ENCODE measurements at regions of chr14 and their contacts with region 1.

Region 1: GRCh38 chr14:29927376-29928116 is at the start of gene PRKD1:
- DNase-seq: peak in 1 of 2 donors; percentile 77
- H3K4me3 ChIP-seq: peak within 1 kb of the TSS; percentile 79 to 85
- H3K27ac ChIP-seq: peak within 1 kb of the TSS; percentile 86 to 90
- H3K4me1 ChIP-seq: peaks cover 0 to 13% of the 10 kb centered on the region in 2 donors
- H3K27me3 ChIP-seq: no peaks in the 10 kb centered on the region
- CTCF ChIP-seq: peak in 1 of 3 experiments; percentile 19
- total RNA-seq, gene PRKD1: 34.6 TPM

Region 2: GRCh38 chr14:29724991-29725390 is 202.6 kb before region 1 on chr14:
- intact Hi-C with region 1: loop called (anchors 5 kb)
- DNase-seq: no peak
- H3K4me3 ChIP-seq: no peak overlapping the region
- H3K27ac ChIP-seq: no peak overlapping the region
- H3K4me1 ChIP-seq: peaks cover 6 to 12% of the 10 kb centered on the region in 2 donors
- H3K27me3 ChIP-seq: no peaks in the 10 kb centered on the region
- CTCF ChIP-seq: no peak

Region 3: DNA sequence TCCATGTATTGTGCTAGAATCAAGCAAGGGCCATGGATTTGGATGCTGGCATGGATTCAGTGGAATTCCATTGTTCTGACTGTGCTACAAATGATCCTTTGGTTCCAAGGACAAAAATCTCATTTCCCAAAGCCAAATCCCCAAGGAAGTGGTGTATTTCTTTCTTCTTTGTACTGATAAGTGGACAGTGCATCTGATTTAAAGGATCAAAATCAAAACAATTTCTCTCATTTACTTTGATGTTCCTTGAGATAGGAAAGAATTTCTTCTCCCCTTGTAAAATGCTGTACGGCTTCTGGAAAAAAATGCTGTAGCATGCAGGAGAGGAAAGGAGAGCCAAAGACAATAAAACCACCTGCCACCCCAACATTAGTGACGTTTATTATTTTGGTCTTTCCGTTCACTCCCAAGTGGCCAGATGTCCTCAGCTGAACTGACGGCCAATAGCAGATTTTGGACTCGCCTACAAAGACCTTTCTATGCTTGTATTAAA is 185.6 kb before region 1 on chr14:
- intact Hi-C with region 1: loop called (anchors 5 kb)
- DNase-seq: peak in 1 of 2 donors; percentile 68
- H3K4me3 ChIP-seq: peak overlapping the region in 1 of 2 donors; percentile 18
- H3K27ac ChIP-seq: peak overlapping the region in 1 of 2 donors; percentile 49
- H3K4me1 ChIP-seq: peaks cover 0 to 18% of the 10 kb centered on the region in 2 donors
- H3K27me3 ChIP-seq: no peaks in the 10 kb centered on the region
- CTCF ChIP-seq: no peak

Region 4: DNA sequence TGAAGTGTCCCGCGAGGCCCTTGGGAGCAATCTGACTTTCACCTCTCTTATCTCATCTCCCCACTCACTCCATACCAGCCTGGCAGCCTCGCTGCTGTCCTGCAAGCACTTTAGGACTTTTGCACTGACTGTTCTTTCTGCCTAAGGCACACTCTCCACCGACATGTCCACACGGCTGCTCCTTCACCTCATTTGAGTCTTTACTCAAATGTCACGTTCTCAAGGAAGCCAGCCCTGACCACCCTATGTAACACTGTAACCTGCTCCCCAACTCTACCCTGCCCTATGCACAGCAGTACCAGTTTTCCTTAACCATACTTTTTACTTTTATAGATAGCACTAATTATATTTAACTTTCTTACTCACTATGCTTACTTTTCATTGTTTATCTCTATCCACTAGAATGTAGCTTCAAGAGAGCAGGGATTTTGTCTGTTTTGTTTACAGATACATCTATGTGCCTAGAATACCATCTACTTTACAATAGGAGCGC is 31.9 kb before region 1 on chr14:
- intact Hi-C with region 1: no loop called
- DNase-seq: no peak
- H3K4me3 ChIP-seq: no peak overlapping the region
- H3K27ac ChIP-seq: no peak overlapping the region
- H3K4me1 ChIP-seq: no peaks in the 10 kb centered on the region
- H3K27me3 ChIP-seq: no peaks in the 10 kb centered on the region
- CTCF ChIP-seq: no peak

Region 5: GRCh38 chr14:30005114-30005808 is 77.7 kb after region 1 on chr14:
- intact Hi-C with region 1: loop called (anchors 5 kb)
- DNase-seq: no peak
- H3K4me3 ChIP-seq: peak overlapping the region in 1 of 2 donors; percentile 21
- H3K27ac ChIP-seq: no peak overlapping the region
- H3K4me1 ChIP-seq: no peaks in the 10 kb centered on the region
- H3K27me3 ChIP-seq: no peaks in the 10 kb centered on the region
- CTCF ChIP-seq: peak; percentile 48 to 83 (median 64)

Region 6: DNA sequence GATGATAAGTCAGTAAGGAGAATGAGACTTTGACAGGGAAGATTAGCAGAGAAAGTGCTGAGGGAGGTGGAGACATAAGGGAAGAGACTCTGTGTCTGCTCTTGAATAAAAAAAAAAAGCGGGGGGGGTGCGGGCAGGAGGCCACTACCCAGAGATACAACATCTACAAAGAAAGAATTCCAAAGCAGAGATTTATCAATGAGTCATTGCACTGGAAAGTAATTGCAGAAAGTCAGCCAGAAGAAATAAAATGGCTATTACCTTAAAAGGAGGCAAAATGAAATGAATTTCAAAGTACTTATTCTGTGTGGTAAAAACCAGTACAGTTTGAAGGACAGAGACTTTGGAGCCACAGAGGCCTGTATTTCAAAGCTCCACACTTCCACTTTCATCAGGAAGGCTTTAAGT is 267.2 kb after region 1 on chr14:
- intact Hi-C with region 1: loop called (anchors 5 kb)
- DNase-seq: no peak
- H3K4me3 ChIP-seq: peak overlapping the region in 1 of 2 donors; percentile 9
- H3K27ac ChIP-seq: peak overlapping the region; percentile 68 to 86
- H3K4me1 ChIP-seq: peaks cover 3 to 22% of the 10 kb centered on the region in 2 donors
- H3K27me3 ChIP-seq: no peaks in the 10 kb centered on the region
- CTCF ChIP-seq: no peak

Region 7: DNA sequence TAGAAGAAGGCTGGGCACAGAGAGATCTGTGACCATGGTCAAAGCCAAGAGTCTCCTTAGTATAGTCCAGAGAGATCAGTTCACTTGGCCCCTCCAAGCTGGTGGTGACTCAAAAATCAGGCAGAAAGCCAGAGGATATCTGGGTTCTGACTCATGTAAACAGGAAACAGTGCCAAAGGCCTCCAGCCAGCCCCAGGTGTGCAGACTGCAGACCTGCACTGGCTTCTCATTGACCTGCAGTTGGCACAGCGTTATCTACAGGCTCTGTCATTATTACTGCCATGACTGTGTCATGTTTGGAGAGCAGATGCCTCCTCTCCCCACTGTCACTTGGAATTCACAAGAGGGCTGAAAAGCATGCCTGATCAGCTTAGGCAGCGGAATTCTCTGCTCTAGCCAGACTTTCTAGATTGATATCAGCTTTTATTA is 295.9 kb after region 1 on chr14:
- intact Hi-C with region 1: loop called (anchors 1 kb)
- DNase-seq: peak; percentile 15 to 87
- H3K4me3 ChIP-seq: no peak overlapping the region
- H3K27ac ChIP-seq: peak overlapping the region; percentile 82 to 87
- H3K4me1 ChIP-seq: peaks cover 8 to 48% of the 10 kb centered on the region in 2 donors
- H3K27me3 ChIP-seq: no peaks in the 10 kb centered on the region
- CTCF ChIP-seq: no peak

Region 8: GRCh38 chr14:30354439-30354838 is 426.9 kb after region 1 on chr14:
- intact Hi-C with region 1: no loop called
- DNase-seq: no peak
- H3K4me3 ChIP-seq: no peak overlapping the region
- H3K27ac ChIP-seq: no peak overlapping the region
- H3K4me1 ChIP-seq: no peaks in the 10 kb centered on the region
- H3K27me3 ChIP-seq: no peaks in the 10 kb centered on the region
- CTCF ChIP-seq: no peak

Region 9: GRCh38 chr14:30417121-30417520 is 489.6 kb after region 1 on chr14:
- intact Hi-C with region 1: no loop called
- DNase-seq: no peak
- H3K4me3 ChIP-seq: no peak overlapping the region
- H3K27ac ChIP-seq: no peak overlapping the region
- H3K4me1 ChIP-seq: no peaks in the 10 kb centered on the region
- H3K27me3 ChIP-seq: no peaks in the 10 kb centered on the region
- CTCF ChIP-seq: no peak